Caco-2 (cell line): ENCODE measurements at regions of chr3 and their contacts with region 1.

Region 1: GRCh38 chr3:124995460-124995994 is 60.3 kb downstream of the HEG1 start:
- DNase-seq: peak; percentile 48 to 50
- H3K4me3 ChIP-seq: no peak overlapping the region
- H3K4me3 Mint-ChIP-seq: no peak overlapping the region
- H3K27ac Mint-ChIP-seq: no peak overlapping the region
- H3K4me1 ChIP-seq: no peaks in the 10 kb centered on the region
- H3K4me1 Mint-ChIP-seq: no peaks in the 10 kb centered on the region
- H3K27me3 ChIP-seq: no peaks in the 10 kb centered on the region
- H3K27me3 Mint-ChIP-seq: no peaks in the 10 kb centered on the region
- CTCF ChIP-seq: peak; percentile 43 to 70

Region 2: GRCh38 chr3:124907957-124908356 is 87.6 kb before region 1 on chr3:
- CTCF ChIA-PET with region 1: no interaction called
- POLR2A ChIA-PET with region 1: no interaction called
- intact Hi-C with region 1: no loop called
- DNase-seq: no peak
- H3K4me3 ChIP-seq: no peak overlapping the region
- H3K4me3 Mint-ChIP-seq: no peak overlapping the region
- H3K27ac Mint-ChIP-seq: no peak overlapping the region
- H3K4me1 ChIP-seq: no peaks in the 10 kb centered on the region
- H3K4me1 Mint-ChIP-seq: no peaks in the 10 kb centered on the region
- H3K27me3 ChIP-seq: no peaks in the 10 kb centered on the region
- H3K27me3 Mint-ChIP-seq: no peaks in the 10 kb centered on the region
- CTCF ChIP-seq: no peak

Region 3: GRCh38 chr3:125055913-125056745 is 60.6 kb after region 1 on chr3 and contains the start of gene HEG1:
- CTCF ChIA-PET with region 1: no interaction called
- POLR2A ChIA-PET with region 1: no interaction called
- intact Hi-C with region 1: loop called (anchors 1 kb)
- DNase-seq: peak; percentile 85 to 90
- H3K4me3 ChIP-seq: peak within 1 kb of the TSS; percentile 64
- H3K4me3 Mint-ChIP-seq: peak within 1 kb of the TSS; percentile 84
- H3K27ac Mint-ChIP-seq: peak within 1 kb of the TSS; percentile 33
- H3K4me1 ChIP-seq: peaks cover 64% of the 10 kb centered on the region
- H3K4me1 Mint-ChIP-seq: peaks cover 49% of the 10 kb centered on the region
- H3K27me3 ChIP-seq: no peaks in the 10 kb centered on the region
- H3K27me3 Mint-ChIP-seq: no peaks in the 10 kb centered on the region
- CTCF ChIP-seq: no peak
- total RNA-seq, gene HEG1: 51.8 and 69.8 TPM in 2 replicates

Region 4: DNA sequence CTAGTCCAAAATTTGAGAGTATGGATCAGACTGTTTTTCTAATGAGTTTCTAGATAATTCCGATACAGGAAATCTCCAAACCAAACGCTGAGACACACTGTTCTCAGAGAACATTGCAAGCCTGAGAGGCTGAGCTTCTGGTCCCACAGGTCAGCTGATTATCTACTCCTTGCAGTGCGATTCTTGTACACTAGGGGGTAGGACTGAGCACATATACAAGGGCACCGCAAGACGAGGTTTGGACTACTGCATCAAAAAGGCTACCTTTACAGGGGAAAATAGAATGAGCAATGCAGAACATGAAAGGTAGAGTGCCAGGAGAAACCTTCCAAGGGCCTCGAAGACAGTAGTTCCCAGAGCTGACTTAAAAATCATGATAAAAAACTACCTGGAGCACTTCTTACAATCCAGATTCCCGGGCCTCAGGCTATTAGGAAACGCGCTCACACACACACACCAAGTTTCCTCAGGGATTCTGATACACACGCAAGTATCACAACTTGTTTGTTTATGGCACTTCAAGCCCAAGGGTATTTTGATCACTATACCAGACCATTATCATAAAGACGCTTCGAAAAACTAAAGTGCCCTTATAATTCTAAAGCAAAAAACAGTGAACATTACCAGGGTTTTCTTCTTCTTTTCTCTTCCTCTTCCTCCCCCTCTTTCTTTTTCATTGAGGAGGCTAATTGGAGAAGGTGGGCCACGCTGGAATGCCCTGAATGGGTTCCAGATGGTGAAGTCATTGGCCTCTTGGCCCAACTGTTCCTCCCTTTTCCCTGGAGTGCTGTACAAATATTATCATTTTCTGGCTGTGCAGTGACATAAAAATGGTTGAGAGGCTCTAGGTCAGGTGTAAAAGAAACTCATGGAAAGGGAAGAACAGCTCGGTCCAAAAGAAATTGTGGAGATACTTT is 155.3 kb after region 1 on chr3:
- CTCF ChIA-PET with region 1: no interaction called
- POLR2A ChIA-PET with region 1: no interaction called
- intact Hi-C with region 1: loop called (anchors 5 kb)
- DNase-seq: peak; percentile 63 to 74
- H3K4me3 ChIP-seq: no peak overlapping the region
- H3K4me3 Mint-ChIP-seq: no peak overlapping the region
- H3K27ac Mint-ChIP-seq: no peak overlapping the region
- H3K4me1 ChIP-seq: 0 out of 2 replicates have a peak, but pooled peaks cover 5% of the 10 kb centered on the region
- H3K4me1 Mint-ChIP-seq: no peaks in the 10 kb centered on the region
- H3K27me3 ChIP-seq: no peaks in the 10 kb centered on the region
- H3K27me3 Mint-ChIP-seq: no peaks in the 10 kb centered on the region
- CTCF ChIP-seq: peak; percentile 36 to 79

Region 5: DNA sequence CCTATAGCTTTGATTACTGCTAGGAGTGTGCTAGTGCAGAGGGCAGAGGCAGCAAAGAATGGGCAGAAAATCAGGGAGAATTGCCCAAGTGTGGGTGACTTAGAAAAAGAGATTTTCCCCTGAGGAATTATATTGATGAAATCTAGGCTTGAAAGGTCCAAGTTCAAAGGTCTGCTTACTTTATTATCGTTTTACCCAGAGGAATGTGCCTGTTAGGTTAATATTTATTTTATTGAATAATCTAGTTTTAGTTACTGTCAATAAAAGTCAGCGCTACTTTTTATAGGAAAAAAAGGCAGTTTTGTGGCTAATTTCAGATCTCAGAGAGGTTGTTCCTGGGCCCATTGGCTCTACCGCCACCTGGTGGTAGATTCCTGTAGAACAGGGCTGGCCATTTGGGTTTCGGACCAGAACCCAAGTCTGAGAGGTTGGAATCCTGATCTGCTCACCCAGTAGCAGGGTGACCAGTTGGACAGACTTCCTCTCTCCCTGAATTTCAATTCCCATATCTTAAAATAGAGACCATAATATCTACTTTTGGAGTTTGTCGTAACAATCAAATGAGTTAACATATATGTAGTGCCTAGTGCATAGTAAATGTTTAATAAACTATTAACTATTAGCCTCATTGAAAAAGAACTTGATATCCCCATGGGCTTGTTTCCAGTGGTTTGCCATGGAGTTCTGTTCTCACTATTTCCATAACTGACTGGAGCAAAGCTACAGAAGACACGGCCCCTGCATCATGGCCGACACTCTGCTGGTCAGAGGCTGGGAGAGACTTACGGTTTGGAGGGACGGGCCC is 442.3 kb after region 1 on chr3:
- CTCF ChIA-PET with region 1: interaction called, 3 read pairs
- POLR2A ChIA-PET with region 1: no interaction called
- intact Hi-C with region 1: loop called (anchors 5 kb)
- DNase-seq: peak; percentile 60 to 72
- H3K4me3 ChIP-seq: no peak overlapping the region
- H3K4me3 Mint-ChIP-seq: no peak overlapping the region
- H3K27ac Mint-ChIP-seq: no peak overlapping the region
- H3K4me1 ChIP-seq: peaks cover 33% of the 10 kb centered on the region
- H3K4me1 Mint-ChIP-seq: peaks cover 20% of the 10 kb centered on the region
- H3K27me3 ChIP-seq: no peaks in the 10 kb centered on the region
- H3K27me3 Mint-ChIP-seq: no peaks in the 10 kb centered on the region
- CTCF ChIP-seq: peak; percentile 89 to 93

Region 6: GRCh38 chr3:125585595-125586223 is 590.2 kb after region 1 on chr3:
- CTCF ChIA-PET with region 1: no interaction called
- POLR2A ChIA-PET with region 1: no interaction called
- intact Hi-C with region 1: loop called (anchors 10 kb)
- DNase-seq: peak; percentile 56 to 66
- H3K4me3 ChIP-seq: no peak overlapping the region
- H3K4me3 Mint-ChIP-seq: no peak overlapping the region
- H3K27ac Mint-ChIP-seq: no peak overlapping the region
- H3K4me1 ChIP-seq: peaks cover 3% of the 10 kb centered on the region
- H3K4me1 Mint-ChIP-seq: peaks cover 7% of the 10 kb centered on the region
- H3K27me3 ChIP-seq: no peaks in the 10 kb centered on the region
- H3K27me3 Mint-ChIP-seq: no peaks in the 10 kb centered on the region
- CTCF ChIP-seq: peak; percentile 75 to 85